ENCODE measurements at regions of chr2 and their contacts with region 1.

Region 1: GRCh38 chr2:85561317-85561979 is at the start of gene GGCX:
- DNase-seq: peak; percentile 92
- H3K4me3 ChIP-seq: peak within 1 kb of the TSS; percentile 69 to 75 (median 71)
- H3K27ac ChIP-seq: peak within 1 kb of the TSS; percentile 31
- H3K4me1 ChIP-seq: peaks cover 3% of the 10 kb centered on the region
- H3K27me3 ChIP-seq: no peaks in the 10 kb centered on the region
- CTCF ChIP-seq: no peak
- total RNA-seq, gene GGCX: 42.7 to 43.3 TPM

Region 2: DNA sequence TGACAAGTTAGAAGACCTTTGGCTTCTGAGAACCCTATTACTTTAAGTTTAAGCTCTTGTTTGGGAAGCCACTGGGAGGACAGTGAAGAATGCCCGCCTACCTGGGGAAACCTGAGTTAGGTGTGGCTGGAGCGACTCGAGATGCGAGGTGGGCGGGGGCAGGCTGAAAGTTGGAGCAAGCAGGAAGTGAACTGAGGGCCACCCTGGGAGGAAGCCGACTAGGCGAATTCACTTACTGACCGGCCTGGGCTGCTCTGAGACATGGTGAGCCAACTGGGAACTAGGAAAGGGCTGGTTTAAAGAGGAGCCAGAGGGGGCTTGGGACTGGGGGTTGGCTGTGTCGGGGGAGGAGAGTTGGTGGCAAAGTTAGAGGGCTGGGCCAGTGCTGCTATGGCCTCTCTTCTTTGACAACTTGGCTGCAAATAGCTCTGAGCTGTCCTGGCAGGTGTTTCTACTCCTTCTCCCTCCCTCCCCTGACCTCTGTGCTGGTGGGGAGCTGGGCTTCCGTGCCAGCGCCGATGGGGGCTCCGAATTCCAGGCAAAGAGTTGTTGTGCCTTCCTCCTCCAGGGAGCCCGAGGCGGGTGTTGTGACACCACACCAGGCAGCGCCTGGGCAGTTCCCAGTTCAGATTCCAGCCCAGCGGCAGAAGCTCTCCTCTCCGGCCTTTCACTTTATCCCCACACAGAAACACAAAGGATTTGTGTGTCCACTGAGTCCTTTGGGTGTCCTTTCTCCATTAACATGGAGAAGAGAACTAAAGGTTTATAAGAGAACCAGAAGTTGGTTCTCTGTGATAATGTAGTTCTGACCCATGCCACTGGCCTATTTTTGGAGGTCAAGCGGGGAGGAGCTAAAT is 16.2 kb after region 1 on chr2 and contains the start of gene VAMP8:
- CTCF ChIA-PET with region 1: no interaction called
- dilution Hi-C with region 1: no loop called
- in situ Hi-C with region 1: no loop called
- intact Hi-C with region 1: loop called (anchors 1 kb)
- DNase-seq: peak; percentile 80
- H3K4me3 ChIP-seq: peak within 1 kb of the TSS; percentile 70 to 82 (median 77)
- H3K27ac ChIP-seq: peak within 1 kb of the TSS; percentile 52
- H3K4me1 ChIP-seq: peaks cover 18% of the 10 kb centered on the region
- H3K27me3 ChIP-seq: no peaks in the 10 kb centered on the region
- CTCF ChIP-seq: no peak
- total RNA-seq, gene VAMP8: 94.0 to 166 TPM

Region 3: DNA sequence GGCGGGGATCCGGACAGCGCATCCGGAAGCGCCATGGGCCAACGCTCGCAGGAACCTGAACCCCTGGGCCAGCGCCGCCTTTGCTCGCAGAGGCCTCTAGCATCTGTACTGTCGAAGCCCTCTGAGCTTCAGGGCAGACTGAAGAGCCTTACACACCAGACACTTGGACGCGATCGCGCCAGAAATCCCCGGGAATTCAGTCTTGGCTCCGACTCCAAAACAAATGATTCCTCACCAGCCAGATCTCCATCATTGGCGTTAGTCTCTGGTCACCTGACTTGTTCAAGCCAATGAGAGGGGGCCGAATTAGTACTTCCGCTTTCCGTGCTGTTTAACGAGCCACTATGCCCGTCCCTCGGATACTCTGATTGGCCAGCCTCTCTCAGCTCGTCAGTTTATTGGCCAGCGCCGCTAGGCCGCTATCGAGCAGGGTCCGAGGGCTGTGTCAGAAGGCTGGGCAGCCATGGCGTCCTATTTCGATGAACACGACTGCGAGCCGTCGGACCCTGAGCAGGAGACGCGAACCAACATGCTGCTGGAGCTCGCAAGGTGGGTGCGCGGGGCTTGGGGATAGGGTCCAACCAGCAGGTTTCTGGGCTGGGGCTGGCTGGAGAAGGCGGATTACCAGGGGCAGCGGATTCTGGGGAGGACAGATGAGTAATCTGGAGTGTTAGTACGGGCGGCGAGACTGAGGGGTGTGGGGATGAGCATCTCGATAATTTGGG is 34.0 kb after region 1 on chr2 and contains the start of gene RNF181:
- CTCF ChIA-PET with region 1: no interaction called
- dilution Hi-C with region 1: no loop called
- in situ Hi-C with region 1: no loop called
- intact Hi-C with region 1: loop called (anchors 1 kb)
- DNase-seq: peak; percentile 99
- H3K4me3 ChIP-seq: peak within 1 kb of the TSS; percentile 73 to 93 (median 92)
- H3K27ac ChIP-seq: peak within 1 kb of the TSS; percentile 75
- H3K4me1 ChIP-seq: peaks cover 19% of the 10 kb centered on the region
- H3K27me3 ChIP-seq: no peaks in the 10 kb centered on the region
- CTCF ChIP-seq: no peak
- total RNA-seq, gene RNF181: 101 to 109 TPM

Region 4: GRCh38 chr2:85602476-85603234 is 41.2 kb after region 1 on chr2 and contains the start of gene TMEM150A:
- CTCF ChIA-PET with region 1: no interaction called
- dilution Hi-C with region 1: no loop called
- in situ Hi-C with region 1: no loop called
- intact Hi-C with region 1: loop called (anchors 1 kb)
- DNase-seq: peak; percentile 90
- H3K4me3 ChIP-seq: peak within 1 kb of the TSS; percentile 69 to 94 (median 74)
- H3K27ac ChIP-seq: peak within 1 kb of the TSS; percentile 11
- H3K4me1 ChIP-seq: peaks cover 22% of the 10 kb centered on the region
- H3K27me3 ChIP-seq: no peaks in the 10 kb centered on the region
- CTCF ChIP-seq: peak in 1 of 2 donors; percentile 38
- total RNA-seq, gene TMEM150A: 12.5 to 14.2 TPM

Region 5: DNA sequence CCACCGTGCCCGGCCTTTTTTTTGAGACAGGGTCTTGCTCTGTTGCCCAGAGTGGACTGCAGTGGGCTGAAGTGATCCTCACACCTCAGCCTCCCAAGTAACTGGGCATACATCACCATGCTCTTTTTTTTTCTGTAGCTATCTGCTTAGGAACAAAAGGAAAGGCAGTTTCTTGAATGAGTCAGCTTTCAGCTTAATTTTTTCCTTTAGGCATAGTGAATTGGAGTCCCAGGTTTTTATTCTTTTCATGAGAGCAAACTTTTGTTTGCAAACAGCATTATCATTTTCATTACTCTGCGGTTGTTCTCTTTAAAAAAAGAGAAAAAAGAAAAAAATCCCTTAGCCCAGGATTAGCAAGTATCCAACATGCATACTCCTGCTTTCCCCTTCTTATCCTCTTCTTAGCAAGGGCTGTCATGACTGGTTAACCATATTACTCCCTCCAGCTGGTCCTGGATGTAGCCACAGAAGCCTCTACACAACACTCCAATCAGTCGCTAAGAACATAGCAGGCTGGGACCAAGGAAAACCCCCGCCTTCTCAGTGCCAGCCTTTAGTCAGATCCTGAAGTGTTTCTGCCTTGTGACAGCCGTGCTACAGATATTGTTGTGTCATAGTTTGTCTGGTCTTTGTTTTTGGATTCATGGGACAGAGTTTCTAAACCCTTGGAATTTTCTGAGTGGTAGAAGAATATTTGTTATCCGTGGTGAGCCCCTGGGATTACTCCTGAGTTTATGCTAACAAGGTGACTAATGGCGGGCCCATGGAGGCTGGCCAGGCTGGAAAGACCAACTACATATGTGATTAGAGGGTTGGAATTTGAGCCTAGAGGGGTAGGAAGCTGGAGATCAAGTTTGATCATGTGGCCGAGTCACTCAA is 350.6 kb after region 1 on chr2:
- CTCF ChIA-PET with region 1: no interaction called
- dilution Hi-C with region 1: no loop called
- in situ Hi-C with region 1: no loop called
- intact Hi-C with region 1: no loop called
- DNase-seq: peak; percentile 94
- H3K4me3 ChIP-seq: no peak overlapping the region
- H3K27ac ChIP-seq: peak overlapping the region; percentile 94
- H3K4me1 ChIP-seq: peaks cover 33% of the 10 kb centered on the region
- H3K27me3 ChIP-seq: no peaks in the 10 kb centered on the region
- CTCF ChIP-seq: no peak

Measured in mammary epithelial cell (primary cell).